ENCODE measurements at regions of chr17 and their contacts with region 1.

Region 1: DNA sequence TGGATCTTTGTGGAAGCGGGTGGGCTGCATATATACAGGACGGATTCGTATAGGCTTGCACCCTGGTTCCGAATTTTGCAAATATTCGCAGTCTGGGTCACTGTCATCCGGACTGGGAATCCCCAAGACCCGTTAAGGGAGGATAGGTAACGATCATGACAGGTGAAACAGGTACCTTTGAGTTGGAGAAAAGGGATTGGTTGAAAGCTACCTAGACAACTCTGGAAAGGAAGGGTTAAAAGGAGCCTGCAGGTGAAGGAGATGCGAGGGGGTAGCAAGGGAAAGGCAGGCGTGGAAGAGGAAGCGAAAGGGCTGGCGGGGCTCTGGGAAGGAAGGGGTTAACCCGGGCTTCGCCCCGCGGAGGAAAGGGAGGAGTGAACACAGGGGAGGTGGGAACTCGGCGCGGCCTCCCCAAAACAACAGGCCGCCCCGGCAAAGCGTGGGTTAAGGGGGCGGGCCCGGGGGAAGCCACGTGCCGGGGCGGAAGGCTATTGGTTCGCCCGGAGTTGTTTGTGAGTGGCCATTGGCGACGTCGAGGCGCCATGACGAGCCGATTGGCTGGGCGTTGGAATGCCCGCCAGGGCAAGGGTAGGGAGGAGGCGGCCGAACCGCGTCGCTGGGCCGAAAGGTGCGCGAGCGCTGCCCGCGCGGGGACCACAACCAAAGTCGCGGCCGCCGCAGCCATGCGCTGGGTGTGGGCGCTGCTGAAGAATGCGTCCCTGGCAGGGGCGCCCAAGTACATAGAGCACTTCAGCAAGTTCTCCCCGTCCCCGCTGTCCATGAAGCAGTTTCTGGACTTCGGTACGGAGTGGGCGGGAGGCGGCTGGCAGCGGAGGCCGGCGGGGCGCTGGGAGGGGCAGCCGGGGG is at the start of gene PDK2:
- DNase-seq: peak; percentile 96 to 98 (median 97)
- ATAC-seq: peak; percentile 91 to 96 (median 94)
- H3K4me3 ChIP-seq: peak within 1 kb of the TSS; percentile 63 to 97 (median 79)
- H3K27ac ChIP-seq: peak within 1 kb of the TSS; percentile 84 to 97 (median 89)
- H3K4me1 ChIP-seq: peaks cover 0 to 52% (median 31%) of the 10 kb centered on the region in 12 donors
- H3K27me3 ChIP-seq: no peaks in the 10 kb centered on the region
- CTCF ChIP-seq: no peak
- POLR2A ChIP-seq: peak in 1 of 2 donors; percentile 94
- total RNA-seq, gene PDK2: 142 to 490 (median 200) TPM

Region 2: GRCh38 chr17:49910094-49910857 is 184.7 kb before region 1 on chr17:
- intact Hi-C with region 1: no loop called
- DNase-seq: no peak
- ATAC-seq: no peak
- H3K4me3 ChIP-seq: peak overlapping the region in 1 of 12 donors; percentile 12
- H3K27ac ChIP-seq: no peak overlapping the region
- H3K4me1 ChIP-seq: peaks cover 0 to 10% (median 0%) of the 10 kb centered on the region in 12 donors
- H3K27me3 ChIP-seq: peaks cover 30 to 92% (median 68%) of the 10 kb centered on the region in 9 donors
- CTCF ChIP-seq: no peak
- POLR2A ChIP-seq: no peak

Region 3: GRCh38 chr17:50055426-50056230 is 39.4 kb before region 1 on chr17 and contains the start of gene ITGA3:
- intact Hi-C with region 1: loop called in 2 of 10 experiments (anchors 5 kb)
- DNase-seq: peak; percentile 79 to 86 (median 84)
- ATAC-seq: peak; percentile 43 to 74 (median 70)
- H3K4me3 ChIP-seq: peak within 1 kb of the TSS; percentile 63 to 97 (median 78)
- H3K27ac ChIP-seq: peak within 1 kb of the TSS; percentile 2 to 97 (median 87)
- H3K4me1 ChIP-seq: peaks cover 0 to 88% (median 56%) of the 10 kb centered on the region in 12 donors
- H3K27me3 ChIP-seq: peaks cover 0 to 24% (median 0%) of the 10 kb centered on the region in 9 donors
- CTCF ChIP-seq: no peak
- POLR2A ChIP-seq: no peak
- total RNA-seq, gene ITGA3: 18.4 to 71.2 (median 23.6) TPM

Region 4: DNA sequence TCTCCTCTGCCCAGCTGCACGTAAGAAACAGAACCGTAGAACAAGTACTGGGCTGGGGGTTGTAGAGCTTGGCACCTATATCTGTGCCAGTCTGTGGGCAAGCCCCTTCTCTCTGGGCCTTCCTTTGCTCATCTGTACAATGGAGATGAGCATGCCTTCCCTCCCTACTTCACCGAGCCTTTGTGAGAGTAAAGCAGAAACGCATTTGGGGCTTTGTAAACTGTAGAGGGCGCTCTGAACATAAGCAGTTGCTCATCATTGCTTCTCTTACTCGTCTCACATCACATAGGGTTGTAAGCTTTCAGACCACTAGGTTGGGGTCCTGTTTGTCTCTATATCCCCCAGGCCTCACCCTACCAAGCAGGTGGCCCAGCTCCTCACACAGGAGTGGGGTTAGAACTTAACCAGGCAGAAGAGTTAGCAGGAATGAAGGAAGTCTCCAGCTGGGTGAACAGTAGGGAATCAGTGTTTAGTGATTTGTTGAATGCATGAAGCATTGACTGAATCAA is 19.9 kb after region 1 on chr17:
- intact Hi-C with region 1: loop called in 1 of 10 experiments (anchors 1 kb)
- DNase-seq: no peak
- ATAC-seq: no peak
- H3K4me3 ChIP-seq: no peak overlapping the region
- H3K27ac ChIP-seq: peak overlapping the region in 5 of 12 donors; percentile 8 to 99 (median 95)
- H3K4me1 ChIP-seq: peaks cover 6 to 76% (median 33%) of the 10 kb centered on the region in 12 donors
- H3K27me3 ChIP-seq: peaks cover 0 to 36% (median 0%) of the 10 kb centered on the region in 9 donors
- CTCF ChIP-seq: peak; percentile 31 to 70 (median 53)
- POLR2A ChIP-seq: no peak

Region 5: GRCh38 chr17:50139950-50140871 is 45.2 kb after region 1 on chr17:
- intact Hi-C with region 1: no loop called
- DNase-seq: peak; percentile 82 to 89 (median 84)
- ATAC-seq: peak; percentile 57 to 85 (median 74)
- H3K4me3 ChIP-seq: peak overlapping the region in 3 of 12 donors; percentile 6 to 14 (median 9)
- H3K27ac ChIP-seq: peak overlapping the region; percentile 29 to 80 (median 56)
- H3K4me1 ChIP-seq: peaks cover 0 to 48% (median 32%) of the 10 kb centered on the region in 12 donors
- H3K27me3 ChIP-seq: no peaks in the 10 kb centered on the region
- CTCF ChIP-seq: peak; percentile 89 to 99 (median 95)
- POLR2A ChIP-seq: no peak

Region 6: GRCh38 chr17:50151041-50151936 is 56.3 kb after region 1 on chr17:
- intact Hi-C with region 1: loop called in 1 of 10 experiments (anchors 5 kb)
- DNase-seq: peak; percentile 93 to 95 (median 95)
- ATAC-seq: peak; percentile 75 to 85 (median 80)
- H3K4me3 ChIP-seq: peak overlapping the region; percentile 61 to 98 (median 92)
- H3K27ac ChIP-seq: peak overlapping the region; percentile 83 to 99 (median 96)
- H3K4me1 ChIP-seq: peaks cover 9 to 79% (median 63%) of the 10 kb centered on the region in 12 donors
- H3K27me3 ChIP-seq: no peaks in the 10 kb centered on the region
- CTCF ChIP-seq: peak; percentile 41 to 75 (median 62)
- POLR2A ChIP-seq: peak in 1 of 2 donors; percentile 62

Region 7: DNA sequence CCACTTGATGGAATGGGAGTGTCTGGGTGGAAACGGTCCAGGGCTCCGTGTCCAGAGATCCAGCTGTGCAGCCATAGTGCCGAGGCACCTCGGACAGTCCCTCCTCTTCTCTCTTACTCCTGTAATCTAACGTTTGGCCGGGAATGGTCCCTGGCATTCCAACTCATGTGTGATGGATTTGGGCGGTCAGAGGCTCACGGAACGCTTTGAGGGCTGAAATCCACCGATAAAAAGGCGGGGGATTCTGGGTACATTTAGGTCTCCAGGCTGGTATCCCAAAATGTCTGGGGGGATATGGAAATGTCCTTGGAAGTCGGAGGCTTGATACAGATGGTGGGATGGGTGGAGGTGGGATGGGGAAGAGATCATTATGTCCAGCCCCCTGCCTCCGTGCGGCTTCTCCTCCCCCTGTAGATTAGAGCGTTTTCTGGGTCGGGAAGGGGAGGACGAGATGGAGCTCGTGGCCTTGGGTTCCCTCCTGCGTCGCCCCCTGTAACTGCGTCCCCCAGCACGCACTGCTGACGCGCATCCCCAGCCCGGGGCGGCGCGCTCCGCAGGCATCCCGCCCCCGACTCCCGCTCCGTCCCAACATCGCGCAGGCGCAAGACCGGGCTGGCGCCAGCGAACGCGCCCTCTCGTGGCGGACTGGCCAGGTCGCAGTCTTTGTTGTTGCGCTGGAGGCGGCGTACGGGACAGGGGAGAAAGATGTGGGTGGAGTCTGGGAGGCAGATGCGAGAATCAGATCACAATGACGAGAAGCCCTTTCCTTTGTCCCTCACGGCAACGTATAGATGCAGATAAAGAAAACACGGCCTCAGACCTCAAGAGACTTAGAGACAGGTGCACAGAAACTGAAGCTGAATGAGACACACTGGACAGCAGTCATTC is 66.3 kb after region 1 on chr17:
- intact Hi-C with region 1: loop called in 5 of 10 experiments (anchors 1 to 5 kb)
- DNase-seq: peak; percentile 92 to 96 (median 94)
- ATAC-seq: peak; percentile 79 to 87 (median 86)
- H3K4me3 ChIP-seq: peak overlapping the region; percentile 27 to 70 (median 62)
- H3K27ac ChIP-seq: peak overlapping the region; percentile 10 to 83 (median 72)
- H3K4me1 ChIP-seq: peaks cover 0 to 42% (median 22%) of the 10 kb centered on the region in 12 donors
- H3K27me3 ChIP-seq: no peaks in the 10 kb centered on the region
- CTCF ChIP-seq: peak; percentile 83 to 99 (median 95)
- POLR2A ChIP-seq: peak in 1 of 2 donors; percentile 59

Region 8: DNA sequence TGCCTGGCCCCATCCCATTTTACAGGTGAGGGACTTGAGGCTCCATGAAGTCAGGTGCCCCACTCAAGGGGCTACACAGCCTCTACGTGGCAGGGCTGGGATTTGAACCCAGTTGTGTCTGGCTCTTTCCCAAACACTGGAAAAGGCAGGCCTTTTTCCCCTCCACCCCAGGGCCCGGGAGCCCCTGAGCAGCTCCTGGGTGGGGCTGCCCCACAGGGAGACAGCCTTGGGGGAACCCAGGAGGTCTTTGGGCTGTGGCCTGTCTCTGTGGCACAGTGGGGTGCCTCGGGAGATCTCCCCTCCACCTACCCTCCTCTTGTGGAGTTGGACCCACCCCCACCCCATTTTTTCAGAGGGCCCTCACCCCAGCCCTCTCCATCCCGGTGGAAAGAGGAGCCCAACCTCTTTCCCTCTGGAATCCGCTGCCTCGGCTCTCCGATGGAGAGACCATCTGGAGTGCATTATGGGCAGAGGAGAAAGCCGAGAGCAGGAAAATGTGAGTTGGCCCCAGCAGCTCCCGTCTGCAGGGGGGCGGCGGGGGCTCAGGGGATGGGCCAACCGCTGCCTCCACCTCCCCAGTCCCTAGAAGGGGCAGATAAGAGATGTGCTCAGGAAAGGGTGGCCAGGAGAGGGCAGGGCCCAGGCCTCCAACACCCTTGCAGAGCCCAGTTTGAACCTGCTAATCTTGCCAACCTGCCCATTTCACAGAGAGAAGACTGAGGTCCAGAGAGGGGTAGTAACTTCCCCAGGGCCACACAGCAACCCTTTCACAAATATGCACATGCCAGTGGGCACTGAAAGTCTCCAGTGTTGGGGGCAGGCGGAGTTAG is 163.9 kb after region 1 on chr17:
- intact Hi-C with region 1: no loop called
- DNase-seq: no peak
- ATAC-seq: peak; percentile 16 to 57 (median 37)
- H3K4me3 ChIP-seq: no peak overlapping the region
- H3K27ac ChIP-seq: peak overlapping the region in 4 of 12 donors; percentile 24 to 70 (median 54)
- H3K4me1 ChIP-seq: peaks cover 0 to 30% (median 0%) of the 10 kb centered on the region in 12 donors
- H3K27me3 ChIP-seq: peaks cover 0 to 14% (median 0%) of the 10 kb centered on the region in 9 donors
- CTCF ChIP-seq: no peak
- POLR2A ChIP-seq: no peak

Region 9: GRCh38 chr17:50297407-50297865 is 202.4 kb after region 1 on chr17:
- intact Hi-C with region 1: loop called in 9 of 10 experiments (anchors 1 to 10 kb)
- DNase-seq: peak; percentile 67 to 87 (median 74)
- ATAC-seq: peak; percentile 87 to 93 (median 92)
- H3K4me3 ChIP-seq: no peak overlapping the region
- H3K27ac ChIP-seq: no peak overlapping the region
- H3K4me1 ChIP-seq: no peaks in the 10 kb centered on the region
- H3K27me3 ChIP-seq: peaks cover 0 to 3% (median 0%) of the 10 kb centered on the region in 9 donors
- CTCF ChIP-seq: peak; percentile 86 to 97 (median 94)
- POLR2A ChIP-seq: no peak

Measured in heart left ventricle (tissue), 16 donors.